ENCODE measurements at regions of chr3 and their contacts with region 1.

Region 1: DNA sequence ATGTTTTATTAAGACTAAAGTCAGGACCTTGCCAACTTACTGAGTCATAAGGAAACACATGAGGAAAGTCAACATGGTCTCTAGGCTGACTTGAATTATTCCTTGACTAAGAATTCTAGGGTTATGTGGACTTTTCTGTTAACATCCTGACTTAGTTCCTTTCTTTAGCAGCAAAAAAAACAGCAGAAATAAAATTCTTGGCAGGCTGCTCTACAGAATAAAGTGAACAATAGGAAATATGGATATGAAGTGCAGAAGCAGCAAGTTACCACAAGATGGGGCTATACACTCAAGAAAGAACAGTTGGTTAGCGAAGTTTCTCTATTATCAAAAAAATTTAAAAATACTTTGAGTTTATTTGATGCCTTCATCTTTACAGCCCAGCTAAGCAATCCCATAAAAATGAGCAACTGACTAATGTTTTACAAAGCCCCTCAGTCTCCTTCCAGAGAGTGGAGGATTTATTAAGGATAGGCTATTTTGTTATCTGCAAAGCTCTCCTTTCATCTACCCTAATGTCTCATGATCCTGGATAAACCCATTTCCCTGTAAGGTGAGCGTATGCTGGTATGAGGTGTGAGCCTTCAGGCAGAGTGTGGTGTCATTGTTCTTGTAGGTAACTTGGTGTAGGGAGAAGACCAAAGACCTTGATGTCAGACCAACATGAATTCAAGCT is 23.1 kb upstream of the MCCC1 start:
- DNase-seq: no peak
- H3K4me3 ChIP-seq: no peak overlapping the region
- H3K27ac ChIP-seq: peak overlapping the region; percentile 55 to 61
- H3K4me1 ChIP-seq: peaks cover 0 to 7% of the 10 kb centered on the region in 2 donors
- H3K27me3 ChIP-seq: no peaks in the 10 kb centered on the region
- CTCF ChIP-seq: peak; percentile 74 to 81 (median 80)

Region 2: GRCh38 chr3:182810574-182811268 is 311.7 kb before region 1 on chr3:
- intact Hi-C with region 1: no loop called
- DNase-seq: no peak
- H3K4me3 ChIP-seq: no peak overlapping the region
- H3K27ac ChIP-seq: no peak overlapping the region
- H3K4me1 ChIP-seq: peaks cover 0 to 13% of the 10 kb centered on the region in 2 donors
- H3K27me3 ChIP-seq: no peaks in the 10 kb centered on the region
- CTCF ChIP-seq: no peak

Region 3: GRCh38 chr3:183178629-183179549 is 56.5 kb after region 1 on chr3:
- intact Hi-C with region 1: loop called (anchors 2 kb)
- DNase-seq: peak in 1 of 2 donors; percentile 70
- H3K4me3 ChIP-seq: peak overlapping the region; percentile 65 to 77
- H3K27ac ChIP-seq: no peak overlapping the region
- H3K4me1 ChIP-seq: peaks cover 2 to 11% of the 10 kb centered on the region in 2 donors
- H3K27me3 ChIP-seq: peaks cover 3% of the 10 kb centered on the region
- CTCF ChIP-seq: peak in 2 of 3 experiments; percentile 24 to 39